Breast epithelium (tissue), 4 donors: ENCODE measurements at regions of chr12 and their contacts with region 1.

Region 1: GRCh38 chr12:130053651-130054069 is 108.6 kb upstream of the FZD10 start:
- DNase-seq: no peak
- H3K4me3 ChIP-seq: no peak overlapping the region
- H3K27ac ChIP-seq: no peak overlapping the region
- H3K4me1 ChIP-seq: no peaks in the 10 kb centered on the region
- H3K27me3 ChIP-seq: no peaks in the 10 kb centered on the region
- CTCF ChIP-seq: no peak
- POLR2A ChIP-seq: no peak

Region 2: GRCh38 chr12:128323145-128323920 is 1730.3 kb before region 1 on chr12:
- intact Hi-C with region 1: loop called (anchors 5 kb)
- DNase-seq: no peak
- H3K4me3 ChIP-seq: no peak overlapping the region
- H3K27ac ChIP-seq: no peak overlapping the region
- H3K4me1 ChIP-seq: no peaks in the 10 kb centered on the region
- H3K27me3 ChIP-seq: peaks cover 0 to 3% of the 10 kb centered on the region in 2 donors
- CTCF ChIP-seq: no peak
- POLR2A ChIP-seq: no peak

Region 3: DNA sequence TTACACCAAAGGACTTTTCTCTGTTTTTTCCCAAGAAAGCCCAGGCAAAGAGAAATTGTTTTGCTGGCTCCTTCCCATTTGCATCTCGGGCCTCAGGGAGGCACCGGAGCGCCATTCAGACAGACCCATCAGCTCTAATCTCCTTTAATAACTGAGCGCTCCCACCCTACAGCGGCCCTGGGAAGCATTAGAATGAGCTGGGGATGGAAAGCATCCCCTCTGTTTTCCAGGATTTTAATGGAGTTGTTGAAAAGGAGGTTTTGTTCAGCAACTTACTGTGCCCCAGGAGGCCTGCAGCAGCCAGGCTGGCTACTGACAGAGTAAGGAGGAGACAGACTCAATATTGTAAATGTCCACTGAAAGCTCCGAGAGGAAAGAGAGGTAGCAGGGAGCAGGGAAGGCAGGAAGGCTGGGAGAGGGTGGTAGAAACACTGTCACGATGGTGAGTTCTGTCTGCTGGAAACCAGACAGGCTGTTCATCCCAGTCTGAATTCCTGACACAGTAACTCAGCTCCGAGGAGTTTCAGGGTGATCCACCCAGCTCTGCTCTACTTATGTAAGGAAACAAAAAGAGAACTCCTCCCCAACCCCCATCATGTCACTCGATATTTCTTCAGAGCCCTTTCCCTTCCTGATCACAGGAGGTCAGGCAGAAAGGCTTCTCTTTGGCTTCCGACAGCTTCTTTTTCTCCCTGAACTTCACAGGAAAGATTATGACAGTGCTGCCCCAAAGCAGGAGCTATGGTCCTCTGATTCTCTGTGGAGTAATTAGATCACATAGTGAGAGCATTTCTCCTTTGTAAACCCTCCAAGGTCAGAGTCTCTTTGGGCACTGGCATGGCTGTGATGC is 87.3 kb before region 1 on chr12:
- intact Hi-C with region 1: no loop called
- DNase-seq: no peak
- H3K4me3 ChIP-seq: no peak overlapping the region
- H3K27ac ChIP-seq: no peak overlapping the region
- H3K4me1 ChIP-seq: no peaks in the 10 kb centered on the region
- H3K27me3 ChIP-seq: no peaks in the 10 kb centered on the region
- CTCF ChIP-seq: no peak
- POLR2A ChIP-seq: no peak

Region 4: GRCh38 chr12:130137046-130138018 is 83.7 kb after region 1 on chr12:
- intact Hi-C with region 1: no loop called
- DNase-seq: no peak
- H3K4me3 ChIP-seq: no peak overlapping the region
- H3K27ac ChIP-seq: no peak overlapping the region
- H3K4me1 ChIP-seq: no peaks in the 10 kb centered on the region
- H3K27me3 ChIP-seq: no peaks in the 10 kb centered on the region
- CTCF ChIP-seq: no peak
- POLR2A ChIP-seq: no peak

Region 5: GRCh38 chr12:131710464-131711457 is 1657.1 kb after region 1 on chr12 and contains the start of gene SFSWAP:
- intact Hi-C with region 1: loop called (anchors 10 kb)
- DNase-seq: peak; percentile 44 to 71
- H3K4me3 ChIP-seq: peak within 1 kb of the TSS; percentile 86 to 97 (median 92)
- H3K27ac ChIP-seq: peak within 1 kb of the TSS; percentile 93
- H3K4me1 ChIP-seq: no peaks in the 10 kb centered on the region
- H3K27me3 ChIP-seq: no peaks in the 10 kb centered on the region
- CTCF ChIP-seq: peak in 1 of 3 donors; percentile 5
- POLR2A ChIP-seq: peak; percentile 31
- total RNA-seq, gene SFSWAP: 34.9 to 54.7 (median 49.8) TPM